ENCODE measurements at regions of chr11 and their contacts with region 1.

Region 1: GRCh38 chr11:13343931-13344717 is 66.5 kb downstream of the BMAL1 start:
- DNase-seq: peak; percentile 89
- H3K4me3 Mint-ChIP-seq: no peak overlapping the region
- H3K27ac Mint-ChIP-seq: no peak overlapping the region
- H3K4me1 Mint-ChIP-seq: peaks cover 41% of the 10 kb centered on the region
- H3K27me3 Mint-ChIP-seq: no peaks in the 10 kb centered on the region

Region 2: DNA sequence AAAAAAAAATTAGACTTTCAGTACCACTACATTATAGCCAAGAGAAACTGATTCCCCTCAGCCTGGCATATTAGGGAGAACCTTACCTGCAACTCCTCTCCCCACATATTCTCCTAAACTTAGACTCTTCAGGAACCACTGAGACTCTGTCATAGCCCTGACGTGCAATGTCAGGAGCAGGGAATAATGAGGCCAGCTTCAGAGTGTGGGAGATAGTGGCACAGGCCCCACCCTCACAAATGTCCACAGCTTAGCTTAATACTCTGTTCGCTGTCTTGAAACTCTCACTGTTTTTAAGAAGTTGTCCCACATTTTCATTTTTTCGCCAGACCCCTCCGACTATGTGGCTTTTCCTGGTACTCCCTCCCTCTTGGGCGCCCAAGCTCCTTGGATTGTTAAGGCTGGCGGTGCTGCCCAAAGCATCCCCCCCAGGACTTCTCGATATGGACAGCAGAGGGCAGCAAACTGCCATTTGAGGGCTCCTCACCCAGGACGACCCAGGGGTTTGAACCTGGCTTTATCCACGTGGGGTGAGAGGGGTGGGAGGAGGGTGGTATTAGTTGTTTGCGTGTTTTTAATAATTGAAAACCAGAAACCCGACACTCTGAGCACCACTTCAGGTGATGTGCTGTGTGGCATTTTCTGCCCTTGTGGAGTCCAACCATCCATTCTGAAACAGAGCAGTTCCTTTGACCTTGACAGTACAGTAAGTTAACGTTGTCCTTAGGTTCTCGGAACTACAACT is 380.2 kb before region 1 on chr11:
- CTCF ChIA-PET with region 1: interaction called, 7 read pairs
- intact Hi-C with region 1: loop called (anchors 1 kb)
- DNase-seq: peak; percentile 75
- H3K4me3 Mint-ChIP-seq: no peak overlapping the region
- H3K27ac Mint-ChIP-seq: no peak overlapping the region
- H3K4me1 Mint-ChIP-seq: no peaks in the 10 kb centered on the region
- H3K27me3 Mint-ChIP-seq: peaks cover 13% of the 10 kb centered on the region

Region 3: GRCh38 chr11:13016415-13016814 is 327.7 kb before region 1 on chr11:
- CTCF ChIA-PET with region 1: no interaction called
- intact Hi-C with region 1: loop called (anchors 5 kb)
- DNase-seq: peak; percentile 12
- H3K4me3 Mint-ChIP-seq: no peak overlapping the region
- H3K27ac Mint-ChIP-seq: no peak overlapping the region
- H3K4me1 Mint-ChIP-seq: no peaks in the 10 kb centered on the region
- H3K27me3 Mint-ChIP-seq: peaks cover 40% of the 10 kb centered on the region

Region 4: DNA sequence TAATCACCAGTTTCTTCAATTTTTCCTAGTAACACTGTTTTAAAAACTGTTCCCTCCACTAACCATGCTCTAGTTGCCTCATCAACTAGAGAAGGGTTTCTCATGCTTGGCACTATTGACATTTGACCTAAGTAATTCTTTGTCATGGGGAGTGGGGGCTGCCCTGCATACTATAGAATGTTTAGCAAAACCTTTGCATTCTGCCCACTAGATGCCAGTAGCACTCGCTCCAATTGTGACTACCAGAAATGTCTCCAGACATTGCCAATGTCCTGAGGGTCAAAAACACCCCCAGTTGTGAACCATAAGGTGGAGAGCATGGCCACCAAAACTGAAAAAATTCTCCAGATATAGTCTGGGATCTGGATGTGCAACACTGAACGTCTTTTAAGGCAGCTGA is 94.1 kb before region 1 on chr11:
- CTCF ChIA-PET with region 1: interaction called, 7 read pairs
- intact Hi-C with region 1: loop called (anchors 1 kb)
- DNase-seq: peak; percentile 26
- H3K4me3 Mint-ChIP-seq: no peak overlapping the region
- H3K27ac Mint-ChIP-seq: no peak overlapping the region
- H3K4me1 Mint-ChIP-seq: no peaks in the 10 kb centered on the region
- H3K27me3 Mint-ChIP-seq: peaks cover 9% of the 10 kb centered on the region

Region 5: DNA sequence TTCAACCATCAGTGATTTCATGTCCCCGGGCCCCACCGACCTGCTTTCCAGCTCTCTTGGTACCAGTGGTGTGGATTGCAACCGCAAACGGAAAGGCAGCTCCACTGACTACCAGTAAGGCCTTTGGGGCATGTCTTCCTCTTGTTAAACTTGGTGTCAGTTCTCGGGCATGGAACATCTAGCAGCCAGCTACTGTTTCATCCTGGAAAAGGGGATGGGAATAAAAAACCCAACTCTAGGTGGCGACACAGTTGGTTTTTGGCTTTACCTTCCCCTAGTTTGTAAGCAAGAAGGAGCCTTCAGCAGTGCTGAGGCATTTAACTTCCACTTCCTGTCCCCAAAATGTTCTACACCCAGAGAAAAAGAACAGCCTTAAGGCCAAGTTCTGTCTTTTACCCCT is 10.2 kb after region 1 on chr11:
- CTCF ChIA-PET with region 1: interaction called, 10 read pairs
- intact Hi-C with region 1: no loop called
- DNase-seq: no peak
- H3K4me3 Mint-ChIP-seq: no peak overlapping the region
- H3K27ac Mint-ChIP-seq: no peak overlapping the region
- H3K4me1 Mint-ChIP-seq: no peaks in the 10 kb centered on the region
- H3K27me3 Mint-ChIP-seq: no peaks in the 10 kb centered on the region

Region 6: DNA sequence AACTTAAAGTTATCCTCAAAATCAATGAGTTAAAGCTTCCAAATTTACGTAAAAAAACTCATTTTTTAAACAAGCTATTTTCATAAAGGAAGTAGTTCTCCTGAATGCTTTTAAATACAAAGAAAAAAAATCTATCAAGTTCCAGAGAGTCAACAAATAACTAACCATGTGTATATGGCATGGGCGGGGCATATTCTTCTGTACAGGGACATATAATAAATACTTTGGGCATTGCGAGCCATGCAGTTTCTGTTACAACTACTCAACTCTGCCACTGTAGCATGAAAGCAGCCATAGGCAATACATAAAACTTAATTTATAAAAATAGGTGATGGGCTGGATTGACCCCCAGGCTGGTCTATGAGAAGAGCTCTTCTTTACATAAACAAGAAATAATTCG is 61.1 kb after region 1 on chr11:
- CTCF ChIA-PET with region 1: no interaction called
- intact Hi-C with region 1: no loop called
- DNase-seq: no peak
- H3K4me3 Mint-ChIP-seq: no peak overlapping the region
- H3K27ac Mint-ChIP-seq: no peak overlapping the region
- H3K4me1 Mint-ChIP-seq: no peaks in the 10 kb centered on the region
- H3K27me3 Mint-ChIP-seq: no peaks in the 10 kb centered on the region